GM10248 (cell line): ENCODE measurements at regions of chr6 and their contacts with region 1.

Region 1: DNA sequence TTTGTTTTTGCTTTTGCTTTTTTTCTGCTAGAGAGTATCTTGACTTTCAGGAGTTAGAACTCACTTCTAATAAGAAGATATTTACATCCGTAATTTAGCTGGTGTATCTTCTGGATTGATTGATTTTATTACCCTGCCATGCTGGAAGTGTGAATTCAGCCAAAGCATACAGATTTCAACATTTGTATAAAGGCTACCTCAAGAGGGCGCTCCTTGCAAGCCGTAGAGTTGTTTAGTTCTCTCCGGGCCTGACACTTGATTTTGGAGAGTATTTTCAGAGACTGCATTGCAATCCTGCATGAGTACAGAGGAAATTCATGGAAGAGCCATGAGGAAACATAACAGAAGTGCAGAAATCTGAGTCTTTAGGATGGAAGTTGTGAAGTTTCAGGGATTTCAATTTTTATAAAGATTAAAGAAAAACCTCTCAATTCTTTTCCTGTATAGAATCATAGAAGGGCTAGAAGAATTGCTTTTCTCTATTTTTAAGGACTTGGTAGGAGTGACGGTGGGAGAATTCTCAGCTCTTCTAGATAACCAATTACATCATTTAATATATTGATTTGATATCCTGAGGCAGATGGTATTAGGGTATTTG is 66.7 kb upstream of the TIAM2 start:
- DNase-seq: peak; percentile 73
- CTCF ChIP-seq: peak; percentile 76

Region 2: GRCh38 chr6:154448448-154449096 is 479.9 kb before region 1 on chr6:
- CTCF ChIA-PET with region 1: no interaction called
- POLR2A ChIA-PET with region 1: no interaction called
- DNase-seq: no peak
- CTCF ChIP-seq: no peak

Region 3: DNA sequence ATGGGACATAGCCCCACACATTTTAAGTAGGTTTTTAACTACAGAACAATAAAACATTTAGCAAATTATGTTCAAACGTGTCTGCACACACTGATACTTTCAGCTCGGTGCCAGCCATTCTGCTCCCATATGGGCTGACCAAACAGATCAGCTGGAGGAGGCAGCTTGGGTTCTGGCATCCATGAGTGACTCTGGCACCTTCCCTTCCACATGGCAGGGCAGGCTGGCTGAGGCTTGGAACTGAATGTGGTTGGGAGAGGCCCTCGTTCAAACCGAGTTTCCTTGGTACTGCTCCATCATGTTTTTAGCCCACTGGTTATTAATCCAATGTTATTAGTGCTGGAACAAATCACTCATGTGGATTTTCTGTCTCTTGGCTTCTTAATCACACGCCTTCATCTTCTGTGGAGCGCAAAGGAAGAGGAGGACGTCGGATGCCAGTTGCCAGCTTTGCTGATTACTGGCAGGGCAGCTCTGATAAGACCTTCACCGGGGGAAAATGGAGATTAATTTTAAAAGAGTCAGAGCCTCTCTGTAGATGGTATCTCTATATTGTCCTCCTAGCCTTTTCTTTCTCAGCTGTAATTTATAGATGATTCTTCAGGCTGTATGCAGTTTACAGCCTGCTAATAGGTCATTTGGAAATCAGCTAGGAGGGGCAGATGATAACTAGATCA is 26.4 kb before region 1 on chr6:
- CTCF ChIA-PET with region 1: interaction called, 17 read pairs
- POLR2A ChIA-PET with region 1: no interaction called
- DNase-seq: no peak
- CTCF ChIP-seq: no peak

Region 4: DNA sequence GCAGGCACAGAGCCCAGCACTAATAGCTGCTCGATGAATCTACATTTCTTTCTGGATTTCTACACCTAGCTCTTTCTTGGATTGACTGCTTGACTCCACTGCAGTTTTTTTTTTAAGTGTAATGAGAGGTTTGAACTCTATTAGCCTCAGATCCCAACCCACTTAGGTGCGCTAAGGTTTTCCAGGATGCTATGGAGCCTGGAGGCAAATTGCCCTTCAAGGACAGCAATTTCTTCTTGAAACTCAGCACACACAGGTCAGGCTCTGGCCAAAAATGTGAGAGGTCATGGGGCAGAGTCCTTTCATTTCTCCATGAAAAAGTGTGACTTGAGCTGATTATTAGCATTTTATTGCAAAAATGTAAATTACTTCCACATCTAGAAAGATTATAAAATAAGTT is 14.4 kb after region 1 on chr6:
- CTCF ChIA-PET with region 1: interaction called, 18 read pairs
- POLR2A ChIA-PET with region 1: no interaction called
- DNase-seq: no peak
- CTCF ChIP-seq: no peak

Region 5: DNA sequence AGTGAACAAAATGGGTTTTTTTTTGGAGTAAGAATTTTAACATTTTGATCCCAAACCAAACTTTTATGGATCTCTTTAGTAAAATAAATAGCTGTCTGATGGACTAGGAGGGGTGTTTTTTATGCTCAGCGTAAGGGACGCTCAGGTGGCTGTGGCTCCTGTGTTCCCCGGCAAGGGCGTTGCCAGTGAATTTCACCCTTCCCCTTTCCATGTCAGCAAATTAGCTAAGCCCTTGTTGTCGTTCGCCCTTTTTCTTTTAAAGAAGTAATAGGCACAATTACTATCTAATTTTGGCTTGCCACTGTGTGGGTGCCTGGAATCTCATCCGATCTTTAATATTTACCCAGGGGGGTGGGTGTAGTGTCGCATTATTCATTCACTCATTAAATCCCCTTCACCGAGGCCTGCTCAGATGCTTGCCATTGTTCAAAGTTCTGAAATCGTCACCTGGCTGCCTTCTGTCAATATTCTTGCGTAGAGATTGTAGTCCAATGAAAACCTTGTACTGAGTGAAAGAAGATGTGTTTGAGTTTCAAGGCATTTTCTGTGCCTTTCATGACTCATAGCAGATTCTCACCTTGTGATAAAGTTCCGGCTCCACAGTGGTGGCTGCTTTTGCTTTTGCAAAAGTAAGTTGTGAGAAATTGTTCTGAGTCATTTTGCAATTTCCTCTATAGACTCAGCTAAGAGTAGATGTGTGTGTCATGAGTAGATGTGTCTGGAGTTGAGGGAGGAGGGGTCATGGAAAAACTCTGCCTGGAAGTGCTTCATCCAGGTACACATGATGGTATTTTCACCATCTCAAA is 295.4 kb after region 1 on chr6:
- CTCF ChIA-PET with region 1: interaction called, 10 read pairs
- POLR2A ChIA-PET with region 1: no interaction called
- DNase-seq: peak; percentile 77
- CTCF ChIP-seq: no peak

Region 6: DNA sequence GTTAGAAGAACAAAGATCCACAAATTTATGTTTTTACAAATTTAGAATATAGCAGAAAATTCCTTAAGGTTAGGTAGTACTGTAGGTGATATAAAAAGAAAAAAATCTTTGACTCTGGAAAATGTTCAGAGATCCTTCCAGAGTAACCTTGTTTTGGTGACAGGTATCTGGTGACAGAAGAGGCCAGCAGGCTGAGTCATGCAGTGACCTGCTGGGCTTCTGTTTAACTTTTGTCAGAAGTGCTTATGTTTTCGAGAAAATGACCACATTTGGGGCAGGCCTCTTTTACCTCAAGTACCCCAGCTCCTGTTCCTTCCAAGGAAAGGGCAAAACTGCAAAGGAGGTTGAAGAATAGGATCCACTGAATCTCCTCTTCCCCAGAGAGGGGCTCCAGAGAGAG is 324.9 kb after region 1 on chr6:
- CTCF ChIA-PET with region 1: interaction called, 24 read pairs
- POLR2A ChIA-PET with region 1: no interaction called
- DNase-seq: no peak
- CTCF ChIP-seq: no peak